CD4-positive, alpha-beta T cell (primary cell): ENCODE measurements at regions of chrX and their contacts with region 1.

Region 1: GRCh38 chrX:7147978-7148824 is at the start of gene PUDP:
- DNase-seq: peak; percentile 62 to 94 (median 86)
- ATAC-seq: peak; percentile 80
- H3K4me3 ChIP-seq: peak within 1 kb of the TSS; percentile 98
- H3K4me3 Mint-ChIP-seq: peak within 1 kb of the TSS; percentile 93
- H3K27ac ChIP-seq: peak within 1 kb of the TSS; percentile 58 to 72
- H3K27ac Mint-ChIP-seq: peak within 1 kb of the TSS; percentile 93
- H3K4me1 ChIP-seq: peaks cover 10% of the 10 kb centered on the region
- H3K4me1 Mint-ChIP-seq: peaks cover 22% of the 10 kb centered on the region
- H3K27me3 ChIP-seq: no peaks in the 10 kb centered on the region
- H3K27me3 Mint-ChIP-seq: no peaks in the 10 kb centered on the region
- CTCF ChIP-seq: no peak
- total RNA-seq, gene PUDP: 3.2 to 3.5 TPM

Region 2: DNA sequence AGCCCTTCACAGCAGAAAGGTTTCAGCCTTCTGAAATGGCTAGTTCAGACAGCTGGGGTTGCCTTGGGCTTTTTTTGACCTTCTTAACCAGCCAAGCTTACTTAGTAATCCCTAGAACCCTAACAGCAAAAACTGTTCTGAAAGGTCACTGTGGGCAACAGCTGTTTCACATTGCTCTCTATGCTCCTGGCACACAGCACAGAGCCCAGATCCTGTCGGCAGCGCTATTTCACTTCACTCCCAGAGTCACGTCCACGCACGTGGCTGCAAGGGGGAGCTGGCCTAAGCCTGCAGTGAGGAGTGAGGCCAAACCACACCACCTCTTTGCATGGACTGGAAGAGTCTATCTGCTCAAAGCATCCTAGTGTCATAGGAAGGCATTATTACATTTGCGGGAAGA is 32.6 kb before region 1 on chrX:
- CTCF ChIA-PET with region 1: no interaction called
- POLR2A ChIA-PET with region 1: no interaction called
- intact Hi-C with region 1: no loop called
- DNase-seq: no peak
- ATAC-seq: no peak
- H3K4me3 ChIP-seq: no peak overlapping the region
- H3K4me3 Mint-ChIP-seq: no peak overlapping the region
- H3K27ac ChIP-seq: no peak overlapping the region
- H3K27ac Mint-ChIP-seq: no peak overlapping the region
- H3K4me1 ChIP-seq: peaks cover 3% of the 10 kb centered on the region
- H3K4me1 Mint-ChIP-seq: peaks cover 41% of the 10 kb centered on the region
- H3K27me3 ChIP-seq: no peaks in the 10 kb centered on the region
- H3K27me3 Mint-ChIP-seq: no peaks in the 10 kb centered on the region
- CTCF ChIP-seq: no peak

Region 3: GRCh38 chrX:7925867-7926472 is 777.8 kb after region 1 on chrX:
- CTCF ChIA-PET with region 1: no interaction called
- POLR2A ChIA-PET with region 1: no interaction called
- intact Hi-C with region 1: loop called in 1 of 2 experiments (anchors 10 kb)
- DNase-seq: peak; percentile 30 to 78 (median 44)
- ATAC-seq: peak; percentile 55
- H3K4me3 ChIP-seq: no peak overlapping the region
- H3K4me3 Mint-ChIP-seq: peak overlapping the region; percentile 81
- H3K27ac ChIP-seq: no peak overlapping the region
- H3K27ac Mint-ChIP-seq: peak overlapping the region; percentile 94
- H3K4me1 ChIP-seq: peaks cover 13% of the 10 kb centered on the region
- H3K4me1 Mint-ChIP-seq: peaks cover 18% of the 10 kb centered on the region
- H3K27me3 ChIP-seq: no peaks in the 10 kb centered on the region
- H3K27me3 Mint-ChIP-seq: peaks cover 4% of the 10 kb centered on the region
- CTCF ChIP-seq: peak; percentile 58